ENCODE measurements at regions of chr16 and their contacts with region 1.

Region 1: GRCh38 chr16:53503270-53503923 is 388 bp upstream of the AKTIP start:
- DNase-seq: peak; percentile 100
- ATAC-seq: peak; percentile 90 to 91
- H3K4me3 ChIP-seq: peak overlapping the region; percentile 77 to 91 (median 82)
- H3K27ac ChIP-seq: peak overlapping the region; percentile 95 to 98 (median 96)
- H3K4me1 ChIP-seq: peaks cover 32 to 34% of the 10 kb centered on the region in 2 donors
- H3K27me3 ChIP-seq: no peaks in the 10 kb centered on the region
- CTCF ChIP-seq: peak in 1 of 5 experiments; percentile 5
- POLR2A ChIP-seq: peak; percentile 80 to 89

Region 2: DNA sequence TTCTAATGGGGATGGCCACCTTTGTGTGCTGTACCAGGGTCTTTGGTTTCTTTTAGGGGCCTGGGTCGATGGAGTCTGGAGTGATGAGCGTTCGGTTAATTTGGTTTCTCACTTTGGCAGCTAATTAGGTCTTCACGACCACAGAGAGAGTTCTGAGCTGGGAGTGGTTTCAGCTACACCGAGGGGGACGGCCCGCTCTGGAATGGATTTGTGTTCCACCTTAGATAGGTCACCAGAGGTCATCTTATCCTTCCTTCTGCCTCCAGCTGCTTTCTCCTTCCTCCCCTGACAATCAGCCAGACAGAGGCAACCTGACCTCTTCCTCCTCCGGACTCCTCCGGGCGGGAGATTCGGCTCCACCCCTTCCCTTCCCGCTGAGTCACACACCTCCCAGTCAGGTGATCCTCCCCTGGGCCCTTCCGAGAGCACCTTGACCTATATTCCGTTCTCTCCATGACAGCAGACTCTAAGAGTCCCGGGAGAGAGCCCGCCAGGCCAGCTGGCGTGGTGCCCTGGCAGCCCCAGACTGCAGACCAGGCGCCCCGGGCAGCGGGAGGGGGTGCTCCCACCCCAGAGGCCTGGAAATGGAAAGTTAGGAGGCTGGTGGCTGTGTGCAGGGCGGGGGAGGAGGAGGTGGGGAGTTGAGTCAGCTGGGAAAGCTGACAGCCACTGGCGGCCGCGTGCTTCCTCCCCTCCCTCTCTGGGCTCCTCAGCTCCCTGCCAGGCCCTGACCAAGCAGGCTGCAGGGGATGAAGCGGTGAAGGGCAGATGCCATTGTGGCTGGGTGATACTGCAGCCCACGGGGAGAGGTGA is 403.9 kb before region 1 on chr16:
- in situ Hi-C with region 1: no loop called
- intact Hi-C with region 1: loop called (anchors 10 kb)
- DNase-seq: peak; percentile 94 to 99
- ATAC-seq: peak; percentile 85 to 91
- H3K4me3 ChIP-seq: peak overlapping the region; percentile 51 to 60 (median 54)
- H3K27ac ChIP-seq: peak overlapping the region; percentile 94 to 96 (median 95)
- H3K4me1 ChIP-seq: peaks cover 45% of the 10 kb centered on the region in 2 donors
- H3K27me3 ChIP-seq: no peaks in the 10 kb centered on the region
- CTCF ChIP-seq: no peak
- POLR2A ChIP-seq: peak in 1 of 2 donors; percentile 39

Region 3: DNA sequence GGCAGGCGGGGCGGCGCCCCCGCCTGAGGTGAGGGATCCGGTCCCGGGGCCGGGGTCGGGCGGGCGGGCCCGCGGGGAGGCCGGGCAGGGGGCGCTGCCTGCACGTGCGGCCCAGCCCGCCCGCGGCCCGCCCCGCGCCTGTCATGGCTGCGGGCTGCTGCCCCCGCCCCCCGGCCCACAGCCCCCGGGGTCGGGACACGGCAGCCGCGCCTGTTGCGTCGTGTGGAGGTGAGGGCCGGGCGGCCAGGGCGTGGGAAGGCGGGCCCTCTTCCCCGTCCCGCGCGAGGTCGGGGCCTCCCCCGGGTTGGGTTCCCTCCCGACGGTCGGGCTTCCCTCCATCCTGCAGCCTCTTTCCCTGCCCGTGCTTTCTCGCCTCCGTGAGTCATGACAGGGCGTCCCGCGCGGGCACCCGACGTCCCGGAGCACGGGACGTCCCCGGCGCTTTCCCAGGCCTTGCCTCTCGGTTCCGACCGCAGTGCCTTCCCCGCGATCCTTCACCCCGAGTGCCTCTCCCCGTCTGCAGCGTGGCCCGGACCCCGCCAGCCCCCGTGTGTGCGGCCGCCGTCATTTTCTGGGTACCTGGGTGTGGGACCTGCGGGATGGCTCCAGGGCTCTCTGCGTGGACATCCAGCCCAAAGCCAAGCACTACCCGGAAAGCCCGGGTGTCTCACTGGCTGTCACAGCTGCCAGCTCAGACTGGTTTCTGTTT is 371.9 kb before region 1 on chr16:
- in situ Hi-C with region 1: no loop called
- intact Hi-C with region 1: no loop called
- DNase-seq: peak; percentile 62 to 78
- ATAC-seq: peak; percentile 63 to 64
- H3K4me3 ChIP-seq: peak overlapping the region; percentile 81 to 87 (median 84)
- H3K27ac ChIP-seq: peak overlapping the region; percentile 92 to 97 (median 94)
- H3K4me1 ChIP-seq: peaks cover 28 to 29% of the 10 kb centered on the region in 2 donors
- H3K27me3 ChIP-seq: no peaks in the 10 kb centered on the region
- CTCF ChIP-seq: no peak
- POLR2A ChIP-seq: peak; percentile 10 to 40

Region 4: GRCh38 chr16:53421248-53421647 is 82.1 kb before region 1 on chr16:
- in situ Hi-C with region 1: no loop called
- intact Hi-C with region 1: no loop called
- DNase-seq: no peak
- ATAC-seq: no peak
- H3K4me3 ChIP-seq: no peak overlapping the region
- H3K27ac ChIP-seq: no peak overlapping the region
- H3K4me1 ChIP-seq: no peaks in the 10 kb centered on the region
- H3K27me3 ChIP-seq: no peaks in the 10 kb centered on the region
- CTCF ChIP-seq: no peak
- POLR2A ChIP-seq: no peak

Region 5: DNA sequence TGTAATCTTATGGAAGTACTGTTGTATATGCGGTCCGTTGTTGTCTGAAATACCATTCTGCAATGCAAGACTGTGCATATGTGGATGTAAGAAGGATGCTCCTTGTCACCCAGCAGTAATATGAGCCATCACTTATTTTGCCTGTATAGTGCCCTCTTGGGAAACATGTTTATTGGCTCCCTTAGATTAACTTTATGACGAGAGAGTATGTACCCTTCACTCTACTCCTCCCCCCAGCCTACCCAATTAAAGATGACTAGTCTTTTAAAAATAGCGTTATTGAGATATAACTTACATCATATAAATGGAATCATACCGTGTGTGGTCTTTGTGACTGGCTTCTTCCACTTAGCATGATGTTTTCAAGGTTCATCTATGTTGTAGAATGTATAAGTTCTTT is 234.2 kb after region 1 on chr16:
- in situ Hi-C with region 1: no loop called
- intact Hi-C with region 1: loop called (anchors 10 kb)
- DNase-seq: no peak
- ATAC-seq: peak in 1 of 2 donors; percentile 71
- H3K4me3 ChIP-seq: no peak overlapping the region
- H3K27ac ChIP-seq: peak overlapping the region in 1 of 4 donors; percentile 11
- H3K4me1 ChIP-seq: peaks cover 38 to 51% of the 10 kb centered on the region in 2 donors
- H3K27me3 ChIP-seq: no peaks in the 10 kb centered on the region
- CTCF ChIP-seq: no peak
- POLR2A ChIP-seq: no peak